AG04449 (cell line): ENCODE measurements at regions of chr5 and their contacts with region 1.

Region 1: GRCh38 chr5:15105796-15106393 is 234.3 kb upstream of the ANKH start:
- DNase-seq: no peak
- H3K4me3 ChIP-seq: no peak overlapping the region
- CTCF ChIP-seq: peak; percentile 75

Region 2: DNA sequence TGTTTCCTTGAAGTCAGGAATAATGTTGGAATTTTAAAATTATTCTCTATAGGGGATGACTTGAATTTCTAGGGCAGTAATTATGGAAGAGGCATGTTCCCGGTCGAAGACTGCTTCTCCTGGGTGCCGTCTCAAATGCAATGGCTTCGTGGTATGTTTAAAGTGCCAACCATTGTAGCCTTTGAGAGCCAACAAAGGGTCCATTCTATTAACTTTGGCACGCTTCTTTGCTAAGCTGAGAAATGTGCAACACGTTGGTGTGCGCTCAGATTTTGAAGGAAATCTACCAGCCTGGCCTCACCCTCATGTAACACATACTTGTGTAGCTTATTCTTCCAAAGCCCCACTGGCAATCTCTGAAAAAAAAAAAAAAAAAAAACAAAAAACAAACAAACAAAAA is 13.1 kb before region 1 on chr5:
- CTCF ChIA-PET with region 1: interaction called, 10 read pairs
- POLR2A ChIA-PET with region 1: no interaction called
- DNase-seq: no peak
- H3K4me3 ChIP-seq: no peak overlapping the region
- CTCF ChIP-seq: no peak

Region 3: DNA sequence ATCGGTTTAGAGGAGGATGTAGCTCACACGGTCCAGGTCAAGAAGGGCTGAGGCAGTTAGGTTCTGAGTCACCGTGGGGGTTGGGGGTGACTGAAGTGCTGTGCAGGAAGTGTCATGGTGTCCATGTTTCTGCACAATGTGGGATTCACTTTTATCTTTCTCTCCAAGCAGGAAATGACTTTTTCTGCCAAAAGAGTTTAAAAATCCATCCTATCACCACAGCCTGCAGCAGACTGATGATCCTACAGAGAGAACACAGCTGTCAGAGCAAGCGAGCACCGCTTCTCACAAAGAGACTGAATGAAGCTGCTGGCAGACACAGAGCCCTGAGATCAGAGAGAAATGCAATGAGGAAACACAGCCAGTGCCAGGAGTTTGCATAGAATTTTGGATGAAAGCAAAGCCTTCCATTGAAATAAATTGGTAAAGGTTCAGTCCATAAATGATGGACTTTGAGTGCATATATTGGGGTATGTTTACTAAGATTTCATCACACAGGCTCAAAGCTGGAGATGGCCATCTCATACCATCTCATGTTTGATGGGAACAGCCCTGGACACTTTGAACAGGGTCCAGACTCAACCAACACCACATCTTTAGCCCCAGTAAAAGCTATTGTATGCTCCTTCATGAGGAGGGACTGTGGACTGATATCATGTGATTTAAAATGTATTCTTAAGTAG is 180.1 kb after region 1 on chr5:
- CTCF ChIA-PET with region 1: no interaction called
- POLR2A ChIA-PET with region 1: no interaction called
- DNase-seq: no peak
- H3K4me3 ChIP-seq: no peak overlapping the region
- CTCF ChIP-seq: no peak